ENCODE measurements at regions of chr10 and their contacts with region 1.

Region 1: DNA sequence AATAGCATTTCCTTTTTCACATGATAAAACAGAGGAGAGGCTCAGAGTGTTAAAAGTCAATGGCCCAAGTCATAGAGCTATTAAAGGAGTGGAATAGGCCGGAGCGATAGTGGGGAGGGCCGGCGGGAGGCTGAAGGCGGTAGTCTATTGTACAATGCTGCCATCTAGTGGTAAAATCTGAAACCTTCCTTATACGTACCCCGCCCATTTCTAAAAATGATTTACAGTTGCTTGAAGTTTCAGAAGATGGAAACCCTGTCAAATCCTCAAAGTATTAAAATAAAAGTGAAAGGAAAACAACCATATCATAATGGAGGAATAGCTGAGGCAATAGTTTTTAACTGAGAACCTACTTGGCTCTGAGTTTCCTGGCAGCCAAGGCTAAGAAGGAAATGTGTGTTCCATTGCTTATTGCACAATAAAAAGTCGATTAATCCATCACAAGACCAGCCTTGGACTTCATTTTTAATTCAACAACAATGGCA is 209.1 kb downstream of the CCSER2 start:
- DNase-seq: peak; percentile 32
- ATAC-seq: peak; percentile 35
- H3K4me3 Mint-ChIP-seq: no peak overlapping the region
- H3K27ac Mint-ChIP-seq: no peak overlapping the region
- H3K4me1 Mint-ChIP-seq: peaks cover 40% of the 10 kb centered on the region
- H3K27me3 Mint-ChIP-seq: peaks cover 5% of the 10 kb centered on the region
- CTCF ChIP-seq: peak; percentile 62

Region 2: GRCh38 chr10:84237199-84238051 is 300.1 kb before region 1 on chr10:
- CTCF ChIA-PET with region 1: interaction called, 19 read pairs
- POLR2A ChIA-PET with region 1: no interaction called
- DNase-seq: peak; percentile 84
- ATAC-seq: peak; percentile 98
- H3K4me3 Mint-ChIP-seq: no peak overlapping the region
- H3K27ac Mint-ChIP-seq: no peak overlapping the region
- H3K4me1 Mint-ChIP-seq: 0 out of 2 replicates have a peak, but pooled peaks cover 4% of the 10 kb centered on the region
- H3K27me3 Mint-ChIP-seq: peaks cover 27% of the 10 kb centered on the region
- CTCF ChIP-seq: peak; percentile 86

Region 3: DNA sequence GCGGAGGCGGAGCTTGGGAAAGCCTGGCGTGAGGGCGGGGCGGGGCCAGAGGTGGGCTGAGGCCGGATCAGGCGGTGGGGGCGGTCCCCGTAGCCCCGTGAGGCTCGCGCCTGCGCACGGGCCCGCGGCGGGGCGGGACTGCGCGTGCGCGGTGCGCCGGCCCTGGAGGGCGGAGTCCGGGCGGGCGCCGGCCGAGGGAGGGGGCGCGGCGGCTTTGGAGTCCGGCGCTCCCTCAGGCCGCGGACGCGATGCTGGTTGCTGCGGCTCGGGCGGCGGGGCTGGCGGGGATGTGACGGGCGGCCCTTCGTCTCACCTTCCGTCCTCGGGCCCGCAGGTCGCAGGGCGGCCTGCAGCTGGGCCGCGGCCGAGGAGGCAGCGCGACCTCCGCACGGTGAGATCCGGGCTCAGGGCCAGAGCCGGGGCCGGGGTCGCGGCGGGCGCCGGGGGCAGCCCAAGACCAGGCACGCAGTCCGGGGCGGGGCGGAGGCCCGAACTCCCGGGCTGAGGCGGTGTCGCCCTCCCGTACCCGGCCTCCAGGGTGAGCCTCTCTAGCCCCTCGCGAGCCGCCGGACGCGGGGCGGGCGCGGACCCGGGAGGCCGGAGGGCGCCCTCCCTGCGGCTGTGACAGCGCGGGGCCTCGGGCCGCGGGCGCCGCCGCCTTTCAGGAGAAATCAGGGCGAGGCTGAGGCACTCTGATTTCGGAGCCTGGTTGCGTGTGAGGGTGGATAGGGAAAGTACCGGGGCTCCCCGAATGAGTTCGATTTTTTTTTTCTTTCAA is 208.9 kb before region 1 on chr10 and contains the start of gene CCSER2:
- CTCF ChIA-PET with region 1: interaction called, 10 read pairs
- POLR2A ChIA-PET with region 1: no interaction called
- DNase-seq: peak; percentile 99
- ATAC-seq: peak; percentile 91
- H3K4me3 Mint-ChIP-seq: peak within 1 kb of the TSS; percentile 96
- H3K27ac Mint-ChIP-seq: peak within 1 kb of the TSS; percentile 99
- H3K4me1 Mint-ChIP-seq: peaks cover 37% of the 10 kb centered on the region
- H3K27me3 Mint-ChIP-seq: no peaks in the 10 kb centered on the region
- CTCF ChIP-seq: no peak
- total RNA-seq, gene CCSER2: 21.4 to 30.6 TPM (median 22.7 TPM) in 3 replicates

Region 4: DNA sequence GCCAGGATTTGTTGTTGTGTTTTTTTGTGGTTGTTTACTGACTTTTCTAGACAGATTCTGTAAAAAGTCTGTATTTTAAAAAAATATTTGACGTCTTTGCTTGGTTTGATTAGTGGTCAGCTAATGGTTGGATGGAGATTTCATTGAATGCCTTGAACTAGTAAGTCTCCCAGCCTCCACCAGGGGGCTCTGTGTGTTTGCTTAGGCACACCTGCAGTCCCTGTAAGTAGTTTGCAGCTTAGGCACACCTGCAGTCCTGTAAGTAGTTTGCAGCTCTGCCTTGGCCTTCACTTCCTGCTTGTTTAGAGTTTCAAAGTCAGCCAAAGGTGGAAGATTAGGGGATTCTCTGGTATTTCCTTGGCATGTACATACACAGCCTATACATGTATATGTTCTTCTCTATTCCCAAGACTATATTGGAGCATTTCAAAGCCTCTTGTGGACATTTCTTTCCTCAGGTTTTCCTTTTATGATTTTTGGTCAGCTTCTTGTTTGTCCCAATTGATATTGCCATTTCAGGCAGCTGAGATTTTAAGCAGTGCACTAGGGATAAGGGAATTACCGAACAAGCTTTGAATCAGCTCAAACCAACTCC is 107.5 kb before region 1 on chr10:
- CTCF ChIA-PET with region 1: interaction called, 108 read pairs
- POLR2A ChIA-PET with region 1: interaction called, 5 read pairs
- DNase-seq: peak; percentile 89
- ATAC-seq: peak; percentile 99
- H3K4me3 Mint-ChIP-seq: no peak overlapping the region
- H3K27ac Mint-ChIP-seq: peak overlapping the region; percentile 71; the same call in 1 of the 2 replicates
- H3K4me1 Mint-ChIP-seq: peaks cover 7% of the 10 kb centered on the region
- H3K27me3 Mint-ChIP-seq: no peaks in the 10 kb centered on the region
- CTCF ChIP-seq: peak; percentile 72

Region 5: GRCh38 chr10:84583501-84583900 is 46.0 kb after region 1 on chr10:
- CTCF ChIA-PET with region 1: interaction called, 15 read pairs
- POLR2A ChIA-PET with region 1: interaction called, 3 read pairs
- DNase-seq: no peak
- ATAC-seq: peak; percentile 15; the same call in 1 of the 2 replicates
- H3K4me3 Mint-ChIP-seq: no peak overlapping the region
- H3K27ac Mint-ChIP-seq: no peak overlapping the region
- H3K4me1 Mint-ChIP-seq: peaks cover 31% of the 10 kb centered on the region
- H3K27me3 Mint-ChIP-seq: peaks cover 14% of the 10 kb centered on the region; the same call in 1 of the 2 replicates
- CTCF ChIP-seq: no peak

Region 6: GRCh38 chr10:84665883-84666463 is 128.5 kb after region 1 on chr10:
- CTCF ChIA-PET with region 1: interaction called, 12 read pairs
- POLR2A ChIA-PET with region 1: no interaction called
- DNase-seq: peak; percentile 91
- ATAC-seq: peak; percentile 98
- H3K4me3 Mint-ChIP-seq: no peak overlapping the region
- H3K27ac Mint-ChIP-seq: no peak overlapping the region
- H3K4me1 Mint-ChIP-seq: peaks cover 15% of the 10 kb centered on the region
- H3K27me3 Mint-ChIP-seq: no peaks in the 10 kb centered on the region
- CTCF ChIP-seq: peak; percentile 74

Region 7: GRCh38 chr10:84696610-84697009 is 159.1 kb after region 1 on chr10:
- CTCF ChIA-PET with region 1: no interaction called
- POLR2A ChIA-PET with region 1: no interaction called
- DNase-seq: no peak
- ATAC-seq: no peak
- H3K4me3 Mint-ChIP-seq: no peak overlapping the region
- H3K27ac Mint-ChIP-seq: no peak overlapping the region
- H3K4me1 Mint-ChIP-seq: no peaks in the 10 kb centered on the region
- H3K27me3 Mint-ChIP-seq: peaks cover 4% of the 10 kb centered on the region; the same call in 1 of the 2 replicates
- CTCF ChIP-seq: no peak

Region 8: DNA sequence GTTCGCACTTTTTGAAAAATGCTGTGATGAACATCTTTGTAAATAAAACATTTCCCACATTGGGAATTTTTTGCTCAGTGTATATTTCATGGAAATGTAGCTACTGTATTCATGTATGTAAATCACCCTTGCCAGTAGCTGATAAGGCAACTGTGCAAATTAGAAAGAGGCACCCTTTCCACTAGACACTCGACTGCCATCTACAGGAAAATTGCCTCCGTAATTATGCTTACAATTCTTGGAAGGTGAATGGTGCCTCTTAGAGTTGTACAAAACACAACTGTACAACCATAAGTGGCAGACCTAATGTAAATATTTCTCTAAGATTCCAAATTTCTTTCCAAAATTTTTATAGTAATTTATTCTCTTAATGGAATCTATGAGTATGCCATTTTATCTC is 282.6 kb after region 1 on chr10:
- CTCF ChIA-PET with region 1: no interaction called
- POLR2A ChIA-PET with region 1: no interaction called
- DNase-seq: no peak
- ATAC-seq: no peak
- H3K4me3 Mint-ChIP-seq: no peak overlapping the region
- H3K27ac Mint-ChIP-seq: no peak overlapping the region
- H3K4me1 Mint-ChIP-seq: no peaks in the 10 kb centered on the region
- H3K27me3 Mint-ChIP-seq: no peaks in the 10 kb centered on the region
- CTCF ChIP-seq: no peak